B cell (primary cell): ENCODE measurements at regions of chr7 and their contacts with region 1.

Region 1: GRCh38 chr7:50281680-50282445 is 22.7 kb upstream of the IKZF1 start:
- DNase-seq: peak; percentile 80
- ATAC-seq: peak; percentile 91
- H3K4me3 ChIP-seq: peak overlapping the region in 4 of 5 experiments; percentile 39 to 57 (median 46)
- H3K4me3 Mint-ChIP-seq: peak overlapping the region; percentile 86
- H3K27ac ChIP-seq: peak overlapping the region; percentile 95 to 96
- H3K27ac Mint-ChIP-seq: peak overlapping the region; percentile 94
- H3K4me1 ChIP-seq: peaks cover 60 to 65% of the 10 kb centered on the region in 2 donors
- H3K4me1 Mint-ChIP-seq: peaks cover 79% of the 10 kb centered on the region
- H3K27me3 ChIP-seq: no peaks in the 10 kb centered on the region
- H3K27me3 Mint-ChIP-seq: no peaks in the 10 kb centered on the region
- CTCF ChIP-seq: no peak

Region 2: DNA sequence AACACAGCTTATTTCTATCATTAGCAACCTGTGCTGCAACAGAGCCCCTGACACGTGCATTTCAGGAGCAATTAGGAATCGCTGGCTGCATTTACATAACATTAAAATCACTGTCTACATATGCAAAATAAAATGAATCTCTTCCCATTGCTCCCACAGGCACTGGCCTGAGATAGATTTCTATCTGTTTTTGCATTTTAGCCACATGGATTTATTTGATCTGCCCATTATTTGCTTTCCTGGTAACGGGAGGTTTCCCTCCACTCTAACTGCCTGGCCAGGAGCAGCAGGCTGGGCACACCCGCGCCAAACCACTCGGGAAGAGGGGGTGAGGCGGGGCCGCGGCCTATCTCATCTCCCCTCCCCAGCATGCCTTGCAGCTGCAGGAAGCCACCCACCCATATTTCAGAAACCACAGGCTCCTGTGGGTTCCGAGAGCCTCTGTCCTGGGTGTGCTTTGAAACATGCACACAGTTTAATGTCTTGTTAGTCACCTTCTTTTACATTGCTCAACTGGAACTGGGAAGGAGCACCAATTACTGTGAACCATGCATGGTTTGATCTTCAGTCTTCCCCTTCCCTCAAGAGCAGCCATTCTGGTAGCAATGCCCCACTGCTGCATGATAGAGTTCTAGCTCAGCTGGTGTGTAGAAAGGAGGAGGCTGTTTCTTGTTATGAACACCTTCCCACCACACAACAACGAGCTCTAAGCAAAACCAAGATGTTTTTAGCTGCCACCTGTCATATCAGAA is 15.1 kb before region 1 on chr7:
- CTCF ChIA-PET with region 1: interaction called, 8 read pairs
- POLR2A ChIA-PET with region 1: interaction called, 4 read pairs
- intact Hi-C with region 1: loop called (anchors 2 kb)
- DNase-seq: peak; percentile 58
- ATAC-seq: peak; percentile 83
- H3K4me3 ChIP-seq: peak overlapping the region in 4 of 5 experiments; percentile 20 to 55 (median 31)
- H3K4me3 Mint-ChIP-seq: peak overlapping the region; percentile 73
- H3K27ac ChIP-seq: peak overlapping the region; percentile 57 to 71
- H3K27ac Mint-ChIP-seq: peak overlapping the region; percentile 95
- H3K4me1 ChIP-seq: peaks cover 94% of the 10 kb centered on the region in 2 donors
- H3K4me1 Mint-ChIP-seq: peaks cover 92% of the 10 kb centered on the region
- H3K27me3 ChIP-seq: no peaks in the 10 kb centered on the region
- H3K27me3 Mint-ChIP-seq: no peaks in the 10 kb centered on the region
- CTCF ChIP-seq: no peak

Region 3: DNA sequence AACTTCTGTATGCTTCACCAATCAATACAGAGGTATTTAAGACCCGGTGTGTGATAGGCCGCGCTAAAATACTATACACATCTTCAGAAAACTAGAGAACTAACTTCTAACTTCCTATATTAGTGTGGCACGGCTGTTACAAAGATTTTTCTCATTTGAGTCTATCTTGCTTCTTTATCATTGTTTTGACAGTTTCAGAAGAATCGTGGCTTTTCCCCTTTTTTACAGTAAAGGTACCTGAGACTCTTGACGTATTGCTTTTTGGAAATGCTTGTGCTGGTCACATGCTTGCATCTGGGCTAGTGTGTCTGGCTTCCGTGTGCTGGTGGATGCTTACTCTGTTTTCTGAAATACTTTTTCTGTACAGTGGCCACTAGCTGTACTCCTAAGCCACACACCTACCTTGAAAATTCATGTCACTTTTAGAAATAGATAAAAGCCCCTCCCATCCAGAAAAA is 35.4 kb after region 1 on chr7:
- CTCF ChIA-PET with region 1: interaction called, 3 read pairs
- POLR2A ChIA-PET with region 1: interaction called, 10 read pairs
- intact Hi-C with region 1: loop called (anchors 5 kb)
- DNase-seq: peak; percentile 86
- ATAC-seq: peak; percentile 74
- H3K4me3 ChIP-seq: peak overlapping the region in 1 of 5 experiments; percentile 37
- H3K4me3 Mint-ChIP-seq: peak overlapping the region; percentile 73
- H3K27ac ChIP-seq: peak overlapping the region; percentile 54 to 83
- H3K27ac Mint-ChIP-seq: peak overlapping the region; percentile 96
- H3K4me1 ChIP-seq: peaks cover 81 to 86% of the 10 kb centered on the region in 2 donors
- H3K4me1 Mint-ChIP-seq: peaks cover 93% of the 10 kb centered on the region
- H3K27me3 ChIP-seq: no peaks in the 10 kb centered on the region
- H3K27me3 Mint-ChIP-seq: no peaks in the 10 kb centered on the region
- CTCF ChIP-seq: peak; percentile 32

Region 4: DNA sequence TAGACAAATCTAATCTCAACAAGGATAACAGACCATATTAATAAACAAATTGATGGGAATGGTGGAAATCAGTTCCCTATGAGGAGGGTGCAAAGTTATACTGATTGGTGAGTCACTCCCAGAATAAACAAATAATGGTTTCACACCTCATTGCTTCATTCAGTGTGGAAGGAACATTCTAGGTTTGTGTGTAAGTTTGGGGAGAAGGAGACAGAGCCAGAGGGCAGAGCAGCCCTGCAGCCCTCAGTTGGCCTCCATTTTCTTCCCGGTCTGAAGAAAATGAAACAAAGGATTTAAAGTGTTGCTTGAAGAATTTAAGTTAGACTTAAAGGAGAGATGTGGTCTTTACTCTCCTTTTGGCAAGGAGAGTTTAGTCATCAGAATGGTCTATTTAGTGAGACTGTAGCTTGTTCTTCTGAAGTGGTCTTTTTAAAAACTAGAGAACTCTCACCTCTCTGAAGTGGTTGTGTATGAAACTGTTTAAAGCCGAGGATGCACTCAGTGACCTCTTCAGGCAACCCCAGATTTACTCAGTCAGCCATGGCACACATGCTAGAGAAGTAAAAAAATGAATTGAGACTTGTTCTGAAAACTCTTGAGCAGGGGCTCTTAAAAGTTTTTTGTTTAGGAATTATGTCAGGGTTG is 49.8 kb after region 1 on chr7:
- CTCF ChIA-PET with region 1: no interaction called
- POLR2A ChIA-PET with region 1: no interaction called
- intact Hi-C with region 1: no loop called
- DNase-seq: peak; percentile 65
- ATAC-seq: peak; percentile 26
- H3K4me3 ChIP-seq: peak overlapping the region in 2 of 5 experiments; percentile 5 to 6
- H3K4me3 Mint-ChIP-seq: peak overlapping the region; percentile 63
- H3K27ac ChIP-seq: peak overlapping the region; percentile 85 to 95
- H3K27ac Mint-ChIP-seq: no peak overlapping the region
- H3K4me1 ChIP-seq: peaks cover 93 to 97% of the 10 kb centered on the region in 2 donors
- H3K4me1 Mint-ChIP-seq: peaks cover 19% of the 10 kb centered on the region
- H3K27me3 ChIP-seq: no peaks in the 10 kb centered on the region
- H3K27me3 Mint-ChIP-seq: no peaks in the 10 kb centered on the region
- CTCF ChIP-seq: no peak

Region 5: DNA sequence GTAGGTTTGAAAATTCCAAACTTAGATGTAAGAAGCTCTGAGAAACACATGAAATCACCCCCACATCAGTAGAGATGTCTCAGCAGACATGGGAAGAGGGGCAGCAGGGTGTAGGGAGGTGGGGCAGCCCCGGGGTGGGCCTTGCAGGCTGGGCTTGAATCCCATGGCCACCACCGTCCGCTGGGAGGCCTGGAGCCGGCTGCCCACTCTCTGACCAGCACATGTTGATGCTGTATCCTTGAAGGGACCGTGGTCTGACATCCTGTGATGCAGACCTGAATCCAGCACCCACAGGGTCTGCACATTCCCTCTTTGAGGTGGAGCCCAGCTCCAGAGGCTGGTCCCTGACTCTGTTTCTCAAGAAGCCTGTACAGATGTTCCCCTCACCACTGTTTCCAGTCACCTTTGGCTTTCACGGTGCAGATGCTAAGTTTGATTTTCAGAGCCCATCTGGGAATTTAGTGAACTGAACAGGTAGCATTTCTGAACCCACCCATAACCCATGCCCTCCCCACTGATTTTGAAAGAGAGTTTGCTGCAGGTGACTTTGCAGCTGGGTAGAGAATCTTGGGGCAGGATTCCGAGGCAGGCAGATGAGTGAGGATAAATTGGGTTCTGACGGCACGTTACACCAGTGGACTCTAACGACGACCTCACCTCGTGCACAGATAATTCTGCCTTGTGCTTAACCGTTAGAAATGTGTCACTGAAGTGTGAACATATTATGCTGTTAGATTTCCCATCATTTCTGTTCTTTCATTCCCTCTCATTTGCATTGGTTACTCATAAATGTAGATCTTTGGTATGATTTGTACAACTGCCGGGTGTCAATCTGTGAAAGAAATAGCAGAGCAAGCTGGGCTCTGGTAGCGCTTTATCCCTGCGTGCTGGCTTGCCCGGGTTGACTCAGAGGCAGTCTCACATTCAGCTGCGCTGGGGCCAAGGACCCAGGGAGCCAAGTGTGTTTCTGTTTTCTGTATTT is 68.4 kb after region 1 on chr7:
- CTCF ChIA-PET with region 1: no interaction called
- POLR2A ChIA-PET with region 1: no interaction called
- intact Hi-C with region 1: loop called (anchors 2 kb)
- DNase-seq: peak; percentile 40
- ATAC-seq: peak; percentile 42
- H3K4me3 ChIP-seq: peak overlapping the region in 2 of 5 experiments; percentile 3 to 17
- H3K4me3 Mint-ChIP-seq: peak overlapping the region; percentile 73
- H3K27ac ChIP-seq: peak overlapping the region; percentile 31 to 90
- H3K27ac Mint-ChIP-seq: peak overlapping the region; percentile 88
- H3K4me1 ChIP-seq: peaks cover 49 to 86% of the 10 kb centered on the region in 2 donors
- H3K4me1 Mint-ChIP-seq: peaks cover 90% of the 10 kb centered on the region
- H3K27me3 ChIP-seq: no peaks in the 10 kb centered on the region
- H3K27me3 Mint-ChIP-seq: no peaks in the 10 kb centered on the region
- CTCF ChIP-seq: no peak